ENCODE measurements at regions of chr1 and their contacts with region 1.

Region 1: DNA sequence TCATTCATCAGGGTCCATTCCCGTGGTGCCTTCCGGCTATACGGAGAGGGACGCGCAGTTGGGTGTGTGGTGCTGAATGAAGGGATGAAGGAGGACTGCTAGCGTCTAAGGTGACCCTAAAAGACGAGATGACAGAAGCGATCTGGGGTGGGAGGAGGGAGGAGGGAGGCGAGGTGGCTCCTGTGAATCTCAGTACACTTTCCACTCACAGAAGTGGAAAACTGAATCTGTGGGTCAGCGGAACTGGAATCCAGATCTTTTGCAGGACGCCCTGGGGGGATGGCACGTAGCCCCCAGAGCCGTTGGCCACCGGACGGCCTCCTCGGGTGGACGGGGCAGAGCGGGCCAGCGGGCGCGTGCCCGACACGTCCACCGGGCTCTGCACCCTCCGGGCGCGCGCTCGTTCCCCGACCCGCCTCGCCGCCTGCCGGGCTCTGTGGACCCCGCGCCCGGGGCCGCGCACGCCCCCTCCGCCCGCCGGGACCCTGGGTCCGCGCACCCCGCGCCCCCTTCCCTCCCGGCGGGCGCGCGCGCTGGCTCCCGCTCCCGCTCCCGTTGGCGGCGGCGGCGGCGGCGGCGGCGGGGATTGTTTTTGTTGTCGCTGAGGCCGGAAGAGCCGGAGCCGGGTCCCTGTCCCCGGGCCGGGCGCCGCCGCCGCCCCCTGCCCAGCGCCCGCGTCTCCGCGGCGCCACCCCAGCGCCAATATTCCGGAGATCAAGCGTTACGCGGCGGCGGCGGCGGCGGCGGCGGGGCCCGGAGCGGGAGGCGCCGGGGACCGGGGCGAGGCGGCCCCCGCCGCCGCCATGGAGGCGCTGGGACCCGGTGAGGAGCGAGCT is at the start of gene AGO4:
- DNase-seq: peak; percentile 52
- ATAC-seq: peak; percentile 55
- H3K4me3 Mint-ChIP-seq: peak within 1 kb of the TSS; percentile 79
- H3K27ac Mint-ChIP-seq: peak within 1 kb of the TSS; percentile 86
- H3K4me1 Mint-ChIP-seq: peaks cover 48% of the 10 kb centered on the region
- H3K27me3 Mint-ChIP-seq: no peaks in the 10 kb centered on the region
- total RNA-seq, gene AGO4: 12.1 to 16.1 TPM

Region 2: DNA sequence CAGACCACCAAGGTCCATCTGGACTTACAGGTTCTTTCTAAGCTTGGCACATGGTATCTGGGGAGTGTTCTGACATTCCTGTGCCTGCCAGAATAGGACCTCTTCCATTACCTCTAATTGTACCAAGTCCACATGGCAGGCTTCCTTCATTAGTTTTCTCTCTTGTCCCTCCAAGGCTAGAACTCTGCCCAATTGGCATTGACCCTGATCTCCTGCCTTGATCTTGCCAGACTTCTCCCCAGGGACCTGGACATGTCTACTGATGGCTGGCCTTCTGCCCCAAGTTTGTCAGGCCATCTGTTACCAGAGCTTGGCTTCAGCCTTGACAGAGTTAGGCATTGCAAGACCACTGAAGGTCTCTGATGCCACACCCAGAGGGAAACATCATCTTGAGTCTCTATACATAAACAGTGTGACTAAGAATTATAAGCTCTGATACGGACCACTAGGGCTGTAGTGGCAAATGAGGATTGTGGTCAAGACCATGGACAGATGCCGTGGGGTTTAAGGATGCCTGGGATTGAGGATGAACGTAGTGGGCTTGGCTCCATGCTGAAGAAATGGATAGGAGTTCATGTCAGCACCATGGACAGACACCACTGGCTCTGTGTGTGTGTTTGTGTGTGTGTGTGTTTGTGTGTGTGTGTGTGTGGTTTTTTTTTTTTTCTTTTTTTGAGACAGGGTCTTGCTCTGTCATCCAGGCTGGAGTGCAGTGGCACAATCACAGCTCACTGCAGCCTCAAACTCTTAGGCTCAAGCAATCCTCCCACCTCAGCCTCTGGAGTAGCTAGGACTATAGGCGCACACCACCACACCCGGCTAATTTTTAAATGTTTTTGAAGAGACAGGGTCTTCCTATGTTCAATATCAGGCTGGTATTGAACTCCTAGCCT is 147.0 kb before region 1 on chr1:
- CTCF ChIA-PET with region 1: no interaction called
- DNase-seq: no peak
- ATAC-seq: no peak
- H3K4me3 Mint-ChIP-seq: no peak overlapping the region
- H3K27ac Mint-ChIP-seq: no peak overlapping the region
- H3K4me1 Mint-ChIP-seq: no peaks in the 10 kb centered on the region
- H3K27me3 Mint-ChIP-seq: peaks cover 9% of the 10 kb centered on the region

Region 3: DNA sequence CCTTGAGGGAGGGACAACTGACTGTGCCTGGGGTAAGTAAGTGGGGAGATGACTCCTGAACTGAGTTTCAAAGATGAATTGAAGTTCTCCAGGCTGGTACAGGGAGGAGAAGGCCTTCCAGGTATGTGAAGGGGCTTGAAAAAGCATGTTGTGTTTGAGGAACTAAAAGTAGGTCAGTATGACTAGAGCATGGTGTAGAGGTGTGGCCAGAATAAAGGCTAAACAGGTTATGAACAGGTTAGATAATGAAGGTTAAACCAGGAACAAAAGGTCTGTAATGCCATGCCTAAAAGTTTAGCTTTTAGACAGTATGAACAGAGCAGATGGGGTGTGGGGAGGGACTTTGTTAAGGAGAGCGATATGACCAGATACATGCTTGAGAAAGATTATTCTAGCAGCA is 30.7 kb before region 1 on chr1:
- CTCF ChIA-PET with region 1: interaction called, 12 read pairs
- DNase-seq: no peak
- ATAC-seq: no peak
- H3K4me3 Mint-ChIP-seq: no peak overlapping the region
- H3K27ac Mint-ChIP-seq: no peak overlapping the region
- H3K4me1 Mint-ChIP-seq: peaks cover 18% of the 10 kb centered on the region
- H3K27me3 Mint-ChIP-seq: no peaks in the 10 kb centered on the region